ENCODE measurements at regions of chr5 and their contacts with region 1.

Region 1: GRCh38 chr5:119585433-119585832 is 43.9 kb upstream of the FAM170A start:
- DNase-seq: no peak
- H3K4me3 ChIP-seq: no peak overlapping the region
- H3K27ac ChIP-seq: no peak overlapping the region
- H3K4me1 ChIP-seq: no peaks in the 10 kb centered on the region
- H3K27me3 ChIP-seq: no peaks in the 10 kb centered on the region
- CTCF ChIP-seq: no peak
- POLR2A ChIP-seq: no peak

Region 2: DNA sequence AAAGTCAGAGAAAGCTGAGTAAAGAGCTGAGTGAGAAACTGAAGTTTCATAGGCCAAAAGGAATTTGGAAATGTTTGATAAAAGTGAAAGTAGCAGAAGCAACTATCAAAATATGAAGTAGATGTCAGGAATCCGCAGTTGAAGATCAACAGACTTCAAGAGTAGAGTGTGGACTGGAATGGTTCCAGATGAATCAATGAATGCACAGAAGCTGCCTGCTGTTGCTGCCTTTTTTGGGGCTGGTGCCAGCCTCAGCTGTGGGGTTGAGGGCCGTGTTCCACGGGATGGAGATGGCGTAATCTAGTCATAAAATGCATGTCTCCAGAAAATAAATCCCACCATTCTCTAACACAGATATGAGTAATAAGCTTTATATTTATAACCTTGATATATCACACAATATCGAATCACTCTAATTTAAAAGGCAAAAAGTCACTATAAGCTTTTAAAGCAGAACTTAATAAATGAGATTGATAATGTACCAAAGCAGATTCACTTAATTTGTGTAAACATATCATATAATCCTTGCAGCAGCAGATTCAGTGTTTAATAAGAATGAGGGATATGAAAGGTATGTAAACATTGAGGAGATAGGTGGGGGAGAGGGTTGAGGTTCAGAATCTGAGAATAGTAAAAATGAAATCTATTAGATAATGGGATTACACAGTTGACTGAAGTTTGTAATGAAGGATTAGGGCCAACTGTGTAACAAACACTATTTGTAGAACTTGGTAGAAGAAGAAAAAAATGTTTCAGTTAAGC is 1614.0 kb after region 1 on chr5:
- intact Hi-C with region 1: loop called (anchors 5 kb)
- DNase-seq: no peak
- H3K4me3 ChIP-seq: peak overlapping the region in 2 of 3 donors; percentile 7 to 39
- H3K27ac ChIP-seq: no peak overlapping the region
- H3K4me1 ChIP-seq: no peaks in the 10 kb centered on the region
- H3K27me3 ChIP-seq: no peaks in the 10 kb centered on the region
- CTCF ChIP-seq: no peak
- POLR2A ChIP-seq: no peak

Measured in breast epithelium (tissue), 4 donors.